ENCODE measurements at regions of chr5 and their contacts with region 1.

Region 1: DNA sequence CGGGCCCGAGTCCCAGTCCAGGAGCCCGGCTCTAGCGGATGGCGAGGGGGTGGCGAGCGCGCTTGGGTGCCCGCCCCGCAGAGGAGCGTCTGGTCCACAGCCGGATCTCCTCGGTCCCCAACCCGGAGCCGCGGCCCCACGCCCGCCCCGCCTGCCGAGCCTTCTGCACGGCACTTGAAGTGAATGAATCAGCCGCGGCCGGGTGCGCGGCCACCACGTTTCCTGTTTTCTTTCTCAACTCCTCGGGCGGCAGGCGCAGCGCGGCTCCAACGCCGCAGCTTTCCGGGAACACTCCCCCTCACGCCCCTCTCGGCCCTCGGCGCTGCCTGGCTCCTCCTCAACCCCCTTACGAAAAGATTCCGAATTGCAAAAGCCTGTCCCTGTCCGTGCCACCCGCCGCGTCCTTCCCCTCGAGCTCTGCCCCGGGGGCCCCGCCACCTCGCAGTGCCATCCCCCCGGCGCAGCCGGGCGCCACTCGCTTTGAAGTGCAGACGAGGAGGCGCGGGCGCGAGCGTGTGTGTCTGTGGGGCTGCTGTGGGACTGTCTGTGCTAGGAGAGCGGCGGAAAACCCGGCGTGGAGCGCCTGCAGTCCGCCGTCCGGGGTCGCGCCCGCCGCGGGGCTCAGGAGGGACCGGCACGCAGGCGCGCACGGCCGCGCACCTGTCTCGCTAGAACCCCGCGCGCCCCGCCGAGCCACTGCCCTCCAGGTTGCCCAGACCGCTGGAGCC is 456.6 kb downstream of the RAB3C start:
- DNase-seq: peak; percentile 53 to 74
- ATAC-seq: peak; percentile 24 to 35
- H3K4me3 ChIP-seq: peak overlapping the region; percentile 75 to 93 (median 79)
- H3K27ac ChIP-seq: peak overlapping the region; percentile 83 to 93 (median 91)
- H3K4me1 ChIP-seq: peaks cover 48 to 71% of the 10 kb centered on the region in 2 donors
- H3K27me3 ChIP-seq: no peaks in the 10 kb centered on the region
- CTCF ChIP-seq: no peak
- POLR2A ChIP-seq: peak; percentile 65 to 76

Region 2: DNA sequence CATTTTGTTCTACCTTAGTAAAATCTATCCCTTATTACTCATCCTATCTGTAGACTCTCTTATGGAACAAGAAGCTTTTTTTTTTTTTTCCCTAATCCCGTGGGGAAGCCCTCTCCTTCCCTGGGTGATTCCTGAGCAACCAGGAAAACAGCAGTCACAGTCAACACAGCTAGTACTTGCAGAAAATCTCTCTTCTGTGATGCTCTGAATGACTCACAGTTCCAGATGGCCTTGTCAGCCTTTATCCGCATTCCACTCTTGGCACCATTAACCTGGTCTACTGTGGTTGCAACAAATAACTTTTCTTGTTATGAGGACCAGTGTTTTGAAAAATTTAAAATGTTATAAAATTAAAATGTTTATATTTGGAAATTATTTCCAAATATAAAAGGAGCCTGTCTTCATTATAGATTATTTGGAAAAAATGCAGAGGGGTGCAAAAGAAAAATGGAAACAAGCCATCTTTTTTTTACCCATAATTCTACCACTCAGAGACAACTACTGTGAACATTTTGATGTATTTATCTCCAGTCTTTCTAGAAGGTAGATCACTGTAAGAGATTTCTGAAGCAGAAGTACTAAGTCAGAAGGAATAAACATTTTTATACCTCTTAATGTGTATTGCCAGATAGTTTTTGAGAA is 30.1 kb after region 1 on chr5:
- in situ Hi-C with region 1: no loop called
- intact Hi-C with region 1: loop called (anchors 2 kb)
- DNase-seq: peak; percentile 28 to 47
- ATAC-seq: peak; percentile 84 to 86
- H3K4me3 ChIP-seq: no peak overlapping the region
- H3K27ac ChIP-seq: peak overlapping the region in 2 of 4 donors; percentile 0 to 32
- H3K4me1 ChIP-seq: peaks cover 6 to 13% of the 10 kb centered on the region in 2 donors
- H3K27me3 ChIP-seq: no peaks in the 10 kb centered on the region
- CTCF ChIP-seq: no peak
- POLR2A ChIP-seq: no peak

Region 3: GRCh38 chr5:59126708-59127573 is 87.5 kb after region 1 on chr5:
- in situ Hi-C with region 1: no loop called
- intact Hi-C with region 1: loop called (anchors 1 kb)
- DNase-seq: no peak
- ATAC-seq: peak in 1 of 2 donors; percentile 17
- H3K4me3 ChIP-seq: peak overlapping the region; percentile 37 to 53 (median 41)
- H3K27ac ChIP-seq: peak overlapping the region; percentile 78 to 89 (median 86)
- H3K4me1 ChIP-seq: peaks cover 50 to 62% of the 10 kb centered on the region in 2 donors
- H3K27me3 ChIP-seq: no peaks in the 10 kb centered on the region
- CTCF ChIP-seq: no peak
- POLR2A ChIP-seq: no peak

Region 4: DNA sequence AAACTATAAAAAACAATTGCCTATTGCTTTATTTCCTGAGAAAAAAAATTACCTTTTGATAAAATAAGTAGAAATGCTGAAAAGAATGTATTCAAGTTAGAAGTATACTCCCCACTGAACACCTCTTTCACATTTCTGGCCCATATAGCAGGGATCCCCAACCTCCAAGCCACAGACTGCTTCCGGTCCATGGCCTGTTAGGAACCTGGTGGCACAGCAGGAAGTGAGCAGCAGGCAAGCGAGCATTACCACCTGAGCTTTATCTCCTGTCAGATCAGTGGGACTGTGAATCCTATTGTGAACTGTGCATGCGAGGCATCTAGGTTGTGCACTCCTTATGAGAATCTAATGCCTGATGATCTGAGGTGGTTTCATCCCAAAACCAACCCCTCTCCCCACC is 107.3 kb after region 1 on chr5:
- in situ Hi-C with region 1: no loop called
- intact Hi-C with region 1: loop called (anchors 5 kb)
- DNase-seq: no peak
- ATAC-seq: no peak
- H3K4me3 ChIP-seq: no peak overlapping the region
- H3K27ac ChIP-seq: peak overlapping the region; percentile 37 to 89 (median 84)
- H3K4me1 ChIP-seq: peaks cover 42 to 57% of the 10 kb centered on the region in 2 donors
- H3K27me3 ChIP-seq: no peaks in the 10 kb centered on the region
- CTCF ChIP-seq: no peak
- POLR2A ChIP-seq: no peak

Region 5: DNA sequence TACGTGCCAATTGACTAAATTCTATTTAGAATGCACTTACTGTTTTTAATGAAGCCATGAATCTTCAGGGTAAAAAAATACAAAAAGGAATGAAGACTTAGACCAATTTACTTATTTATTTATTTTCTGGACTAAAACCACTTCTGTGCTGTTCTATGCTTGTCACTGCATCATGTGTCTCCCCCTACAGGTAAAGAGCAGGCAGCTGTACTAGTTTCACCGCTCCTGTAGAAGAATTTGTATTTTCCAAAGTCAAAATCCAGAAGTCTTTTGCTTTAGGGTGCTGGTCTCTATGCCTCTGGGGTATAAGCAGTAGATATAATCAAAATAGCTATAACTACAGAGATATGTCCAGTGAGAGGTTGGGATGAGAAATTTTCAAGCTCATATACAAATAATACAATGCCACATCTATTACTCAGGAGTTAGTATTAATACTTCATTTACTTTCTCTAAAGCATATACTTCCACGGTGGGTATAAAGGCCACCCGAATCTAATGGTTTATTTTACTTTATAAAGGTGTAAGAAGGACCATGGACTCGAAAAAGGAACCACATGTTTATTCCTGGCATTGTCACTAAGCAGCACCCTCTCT is 134.9 kb after region 1 on chr5:
- in situ Hi-C with region 1: loop called in 3 of 4 experiments (anchors 10 kb)
- intact Hi-C with region 1: loop called (anchors 1 kb)
- DNase-seq: no peak
- ATAC-seq: peak; percentile 41 to 63
- H3K4me3 ChIP-seq: no peak overlapping the region
- H3K27ac ChIP-seq: peak overlapping the region; percentile 4 to 36 (median 26)
- H3K4me1 ChIP-seq: peaks cover 10 to 24% of the 10 kb centered on the region in 2 donors
- H3K27me3 ChIP-seq: no peaks in the 10 kb centered on the region
- CTCF ChIP-seq: peak; percentile 61 to 74 (median 67)
- POLR2A ChIP-seq: no peak

Region 6: GRCh38 chr5:59351076-59351794 is 311.8 kb after region 1 on chr5:
- in situ Hi-C with region 1: loop called (anchors 25 kb)
- intact Hi-C with region 1: loop called (anchors 5 kb)
- DNase-seq: peak; percentile 49 to 61
- ATAC-seq: peak; percentile 94 to 97
- H3K4me3 ChIP-seq: peak overlapping the region in 1 of 4 donors; percentile 57
- H3K27ac ChIP-seq: peak overlapping the region; percentile 81 to 86 (median 83)
- H3K4me1 ChIP-seq: peaks cover 68 to 86% of the 10 kb centered on the region in 2 donors
- H3K27me3 ChIP-seq: no peaks in the 10 kb centered on the region
- CTCF ChIP-seq: peak in 2 of 5 experiments; percentile 32 to 46
- POLR2A ChIP-seq: no peak